BJ (cell line): ENCODE measurements at regions of chr5 and their contacts with region 1.

Region 1: GRCh38 chr5:138035605-138036537 is 3.0 kb upstream of the FAM13B start:
- DNase-seq: peak; percentile 53
- H3K4me3 ChIP-seq: no peak overlapping the region
- H3K27me3 ChIP-seq: no peaks in the 10 kb centered on the region
- CTCF ChIP-seq: peak; percentile 88

Region 2: DNA sequence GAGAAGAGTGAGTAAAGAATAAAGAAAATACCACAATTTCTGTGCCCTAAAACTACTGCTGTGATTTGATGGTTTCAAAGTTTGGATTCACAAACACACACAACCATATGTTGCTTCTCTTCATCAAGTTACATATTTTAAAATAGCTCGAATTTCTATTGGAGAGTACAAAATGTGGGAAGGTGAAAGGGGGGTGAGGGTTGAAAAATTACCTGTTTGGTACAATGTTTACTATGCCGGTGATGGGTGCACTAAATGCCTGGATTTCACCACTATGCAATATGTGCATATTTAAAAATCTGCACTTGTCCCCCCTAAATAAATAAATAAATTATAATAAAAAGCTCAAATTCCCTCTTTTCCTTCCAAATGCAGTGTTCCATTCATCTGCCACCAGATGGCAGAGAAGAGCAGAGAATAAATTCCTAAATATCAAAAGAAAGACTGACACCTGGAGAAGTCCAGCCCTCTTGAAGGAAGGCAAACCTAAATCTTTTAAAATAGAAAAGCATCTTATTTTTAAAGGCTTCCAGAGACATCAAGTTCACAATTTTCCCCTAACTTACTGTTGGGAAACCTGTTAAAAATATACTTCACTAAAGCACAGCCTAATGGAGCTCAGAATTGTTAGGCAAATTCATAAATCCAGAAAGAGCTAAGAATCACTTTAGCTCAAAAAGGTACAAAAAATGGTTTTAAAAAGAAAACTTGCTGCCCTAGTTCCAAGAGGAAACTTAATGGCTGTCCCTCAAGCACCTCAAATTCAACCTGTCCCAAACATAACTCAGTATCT is 256.9 kb before region 1 on chr5:
- CTCF ChIA-PET with region 1: interaction called, 11 read pairs
- POLR2A ChIA-PET with region 1: no interaction called
- DNase-seq: no peak
- H3K4me3 ChIP-seq: no peak overlapping the region
- H3K27me3 ChIP-seq: peaks cover 3% of the 10 kb centered on the region
- CTCF ChIP-seq: peak; percentile 76

Region 3: GRCh38 chr5:138025285-138025684 is 10.6 kb before region 1 on chr5:
- CTCF ChIA-PET with region 1: interaction called, 16 read pairs
- POLR2A ChIA-PET with region 1: no interaction called
- DNase-seq: no peak
- H3K4me3 ChIP-seq: no peak overlapping the region
- H3K27me3 ChIP-seq: no peaks in the 10 kb centered on the region
- CTCF ChIP-seq: no peak

Region 4: GRCh38 chr5:138054847-138055558 is 19.1 kb after region 1 on chr5:
- CTCF ChIA-PET with region 1: interaction called, 11 read pairs
- POLR2A ChIA-PET with region 1: no interaction called
- DNase-seq: no peak
- H3K4me3 ChIP-seq: no peak overlapping the region
- H3K27me3 ChIP-seq: peaks cover 1% of the 10 kb centered on the region; the same call in 1 of the 2 replicates
- CTCF ChIP-seq: no peak

Region 5: GRCh38 chr5:138065102-138065501 is 29.2 kb after region 1 on chr5:
- CTCF ChIA-PET with region 1: interaction called, 188 read pairs
- POLR2A ChIA-PET with region 1: interaction called, 3 read pairs
- DNase-seq: no peak
- H3K4me3 ChIP-seq: no peak overlapping the region
- H3K27me3 ChIP-seq: no peaks in the 10 kb centered on the region; the same call in 1 of the 2 replicates
- CTCF ChIP-seq: peak; percentile 36; the same call in 1 of the 2 replicates

Region 6: DNA sequence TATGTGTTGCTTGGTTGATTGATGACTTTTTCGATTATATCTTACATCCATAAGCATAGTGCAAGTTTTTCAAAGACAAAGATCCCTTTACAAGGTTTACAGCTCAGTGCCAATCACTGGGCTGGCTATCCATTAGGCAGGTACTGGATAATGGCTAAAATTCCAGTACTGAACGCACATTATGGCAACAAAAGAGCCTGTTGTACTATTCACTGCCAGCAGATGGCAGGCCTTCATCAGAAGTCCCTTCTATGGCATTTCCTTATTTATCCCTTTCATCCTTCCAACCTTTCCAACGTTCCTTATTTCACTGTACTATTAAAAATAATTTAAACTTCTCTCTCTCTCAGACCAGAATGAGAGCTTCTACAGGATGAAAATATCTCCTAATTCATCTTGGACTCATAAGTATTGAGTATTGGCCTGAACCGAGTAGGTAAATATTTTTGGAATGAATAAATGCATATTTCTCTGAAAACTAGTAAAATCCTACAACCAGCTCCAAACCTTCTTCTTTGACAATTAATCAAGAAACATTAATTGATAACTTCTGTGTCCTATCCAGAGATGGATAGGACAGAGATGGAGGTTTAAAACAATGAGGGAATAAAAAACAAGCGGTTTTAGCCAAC is 41.3 kb after region 1 on chr5:
- CTCF ChIA-PET with region 1: interaction called, 26 read pairs
- POLR2A ChIA-PET with region 1: no interaction called
- DNase-seq: no peak
- H3K4me3 ChIP-seq: no peak overlapping the region
- H3K27me3 ChIP-seq: peaks cover 2% of the 10 kb centered on the region; the same call in 1 of the 2 replicates
- CTCF ChIP-seq: peak; percentile 82

Region 7: GRCh38 chr5:138128334-138128733 is 92.5 kb after region 1 on chr5:
- CTCF ChIA-PET with region 1: interaction called, 15 read pairs
- POLR2A ChIA-PET with region 1: no interaction called
- DNase-seq: no peak
- H3K4me3 ChIP-seq: no peak overlapping the region
- H3K27me3 ChIP-seq: no peaks in the 10 kb centered on the region
- CTCF ChIP-seq: no peak